ENCODE measurements at regions of chr6 and their contacts with region 1.

Region 1: GRCh38 chr6:100126790-100127484 is 132.9 kb upstream of the MCHR2 start:
- DNase-seq: no peak
- H3K4me3 Mint-ChIP-seq: no peak overlapping the region
- H3K27ac Mint-ChIP-seq: no peak overlapping the region
- H3K4me1 Mint-ChIP-seq: no peaks in the 10 kb centered on the region
- H3K27me3 Mint-ChIP-seq: peaks cover 9% of the 10 kb centered on the region

Region 2: GRCh38 chr6:100171533-100172321 is 44.8 kb after region 1 on chr6:
- CTCF ChIA-PET with region 1: no interaction called
- POLR2A ChIA-PET with region 1: no interaction called
- intact Hi-C with region 1: loop called (anchors 5 kb)
- DNase-seq: peak; percentile 14
- H3K4me3 Mint-ChIP-seq: no peak overlapping the region
- H3K27ac Mint-ChIP-seq: no peak overlapping the region
- H3K4me1 Mint-ChIP-seq: peaks cover 4% of the 10 kb centered on the region
- H3K27me3 Mint-ChIP-seq: peaks cover 1% of the 10 kb centered on the region

Region 3: DNA sequence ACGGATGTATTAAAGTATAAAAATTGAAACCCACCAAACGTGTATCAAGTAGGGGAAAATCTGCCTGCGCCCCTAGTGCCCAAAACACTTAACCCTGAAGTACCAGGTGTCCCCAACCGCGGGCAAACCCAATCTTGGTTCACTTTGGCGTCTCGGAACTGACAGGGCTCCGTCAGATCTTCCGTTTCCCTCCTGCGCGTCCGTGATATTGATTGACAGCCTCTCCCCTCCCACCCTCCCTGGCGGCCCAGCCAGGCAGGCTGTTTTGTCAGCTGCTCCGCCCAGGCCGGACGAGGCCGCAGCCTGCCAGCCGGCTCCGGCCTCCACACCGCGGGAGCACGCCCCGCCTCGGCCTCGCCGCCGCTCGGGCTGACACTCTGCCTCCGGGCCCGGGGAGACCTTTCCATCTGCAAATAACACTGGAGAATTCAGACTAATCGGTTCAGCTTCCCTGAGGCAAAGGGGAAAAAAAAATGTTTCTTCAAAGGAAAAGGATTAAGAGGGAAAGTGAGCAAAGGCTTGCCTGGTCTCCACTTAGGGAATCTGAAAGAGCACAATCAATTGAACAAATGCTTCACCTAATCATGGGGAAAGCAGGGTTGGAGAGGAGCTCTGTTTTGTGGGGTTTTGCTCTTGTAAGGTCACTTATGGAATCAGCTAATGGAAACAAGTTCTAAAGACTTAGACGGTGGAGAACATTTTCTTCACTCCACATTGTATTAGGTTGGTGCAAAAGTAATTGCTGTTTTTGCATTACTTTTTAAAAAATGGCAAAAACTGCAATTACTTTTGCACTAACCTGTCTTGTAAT is 102.1 kb after region 1 on chr6:
- CTCF ChIA-PET with region 1: no interaction called
- POLR2A ChIA-PET with region 1: no interaction called
- intact Hi-C with region 1: loop called (anchors 2 kb)
- DNase-seq: peak; percentile 78
- H3K4me3 Mint-ChIP-seq: peak overlapping the region; percentile 66
- H3K27ac Mint-ChIP-seq: peak overlapping the region; percentile 86
- H3K4me1 Mint-ChIP-seq: peaks cover 26% of the 10 kb centered on the region
- H3K27me3 Mint-ChIP-seq: peaks cover 25% of the 10 kb centered on the region